OCI-LY7 (cell line): ENCODE measurements at regions of chr7 and their contacts with region 1.

Region 1: DNA sequence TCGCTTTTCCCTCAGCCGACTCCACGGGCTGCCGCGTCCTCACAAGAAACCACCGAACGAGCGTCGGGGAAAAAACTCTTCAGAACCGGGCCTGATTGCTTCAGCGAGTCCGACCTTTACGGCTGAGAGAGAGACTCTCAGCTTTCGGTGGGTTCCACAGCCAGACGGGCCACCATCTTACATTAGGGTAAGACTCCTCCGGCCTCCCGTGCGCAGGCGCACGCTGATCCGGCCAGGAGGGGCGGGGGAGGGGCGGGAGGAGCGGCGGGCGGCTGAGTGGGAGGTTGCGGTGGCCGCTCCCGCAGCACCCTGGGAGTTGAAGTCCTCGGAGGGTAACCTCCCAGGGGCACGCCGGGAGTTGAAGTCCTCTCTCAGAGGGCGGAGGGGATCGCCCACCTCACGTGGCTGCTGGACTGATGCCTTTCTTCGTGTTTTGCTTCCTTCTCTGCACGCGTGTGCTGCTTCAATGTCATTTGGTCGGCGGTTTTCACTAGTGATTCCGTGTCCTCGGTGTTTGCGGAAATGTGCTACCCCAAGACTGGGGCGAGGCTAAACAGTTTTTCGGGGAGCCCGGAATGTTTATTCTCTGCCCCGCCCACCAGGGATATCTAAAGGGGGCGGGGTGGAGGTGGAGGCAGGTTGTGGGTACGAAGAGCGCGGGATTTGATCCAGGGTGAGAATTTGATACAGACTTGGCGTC is at the start of gene CNOT4:
- DNase-seq: peak; percentile 97
- H3K4me3 ChIP-seq: peak within 1 kb of the TSS; percentile 97
- H3K27ac ChIP-seq: peak within 1 kb of the TSS; percentile 71
- H3K4me1 ChIP-seq: peaks cover 28% of the 10 kb centered on the region
- CTCF ChIP-seq: no peak
- total RNA-seq, gene CNOT4: 18.7 and 21.8 TPM in 2 replicates

Region 2: GRCh38 chr7:135558337-135558767 is 48.3 kb after region 1 on chr7:
- CTCF ChIA-PET with region 1: no interaction called
- POLR2A ChIA-PET with region 1: interaction called, 3 read pairs
- intact Hi-C with region 1: loop called (anchors 1 kb)
- DNase-seq: peak; percentile 85
- H3K4me3 ChIP-seq: peak overlapping the region; percentile 97
- H3K27ac ChIP-seq: peak overlapping the region; percentile 92
- H3K4me1 ChIP-seq: peaks cover 41% of the 10 kb centered on the region
- CTCF ChIP-seq: peak; percentile 89

Region 3: GRCh38 chr7:135645296-135645904 is 135.3 kb after region 1 on chr7:
- CTCF ChIA-PET with region 1: no interaction called
- POLR2A ChIA-PET with region 1: interaction called, 3 read pairs
- intact Hi-C with region 1: loop called (anchors 2 kb)
- DNase-seq: peak; percentile 66
- H3K4me3 ChIP-seq: no peak overlapping the region
- H3K27ac ChIP-seq: no peak overlapping the region
- H3K4me1 ChIP-seq: no peaks in the 10 kb centered on the region
- CTCF ChIP-seq: peak; percentile 84